Mammary epithelial cell (primary cell): ENCODE measurements at regions of chr22 and their contacts with region 1.

Region 1: GRCh38 chr22:26679003-26679629 is 21.7 kb downstream of the MIAT start:
- DNase-seq: peak; percentile 54
- H3K4me3 ChIP-seq: no peak overlapping the region
- H3K27ac ChIP-seq: no peak overlapping the region
- H3K4me1 ChIP-seq: peaks cover 6% of the 10 kb centered on the region
- H3K27me3 ChIP-seq: no peaks in the 10 kb centered on the region
- CTCF ChIP-seq: peak; percentile 92 to 94

Region 2: DNA sequence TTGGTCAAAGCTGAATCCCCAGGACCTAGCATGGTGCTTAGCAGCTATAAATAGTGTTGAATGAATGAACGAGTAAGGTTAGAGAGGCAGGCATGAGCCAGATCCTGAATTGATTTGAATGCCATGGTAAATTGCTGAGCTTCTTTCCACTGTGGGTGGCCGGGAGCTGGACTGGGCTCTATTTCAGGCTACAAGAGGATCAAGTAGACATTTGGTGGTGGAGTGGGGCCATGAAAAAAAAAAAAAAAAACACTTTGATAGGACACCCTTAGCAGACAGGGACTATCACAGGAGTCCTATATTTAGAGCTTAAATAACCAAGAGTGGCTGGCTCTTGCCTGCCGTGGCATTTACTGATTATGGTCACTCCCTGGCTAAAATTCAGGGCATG is 55.9 kb after region 1 on chr22:
- CTCF ChIA-PET with region 1: no interaction called
- dilution Hi-C with region 1: loop called (anchors 5 kb)
- in situ Hi-C with region 1: no loop called
- intact Hi-C with region 1: no loop called
- DNase-seq: no peak
- H3K4me3 ChIP-seq: no peak overlapping the region
- H3K27ac ChIP-seq: no peak overlapping the region
- H3K4me1 ChIP-seq: no peaks in the 10 kb centered on the region
- H3K27me3 ChIP-seq: no peaks in the 10 kb centered on the region
- CTCF ChIP-seq: no peak

Region 3: GRCh38 chr22:26756675-26757293 is 77.7 kb after region 1 on chr22:
- CTCF ChIA-PET with region 1: no interaction called
- dilution Hi-C with region 1: no loop called
- in situ Hi-C with region 1: no loop called
- intact Hi-C with region 1: loop called (anchors 2 kb)
- DNase-seq: peak; percentile 36
- H3K4me3 ChIP-seq: peak overlapping the region in 1 of 3 experiments; percentile 36
- H3K27ac ChIP-seq: no peak overlapping the region
- H3K4me1 ChIP-seq: peaks cover 3% of the 10 kb centered on the region
- H3K27me3 ChIP-seq: no peaks in the 10 kb centered on the region
- CTCF ChIP-seq: peak; percentile 48 to 72

Region 4: GRCh38 chr22:26785932-26786331 is 106.8 kb after region 1 on chr22:
- CTCF ChIA-PET with region 1: no interaction called
- dilution Hi-C with region 1: loop called (anchors 5 kb)
- in situ Hi-C with region 1: no loop called
- intact Hi-C with region 1: no loop called
- DNase-seq: no peak
- H3K4me3 ChIP-seq: no peak overlapping the region
- H3K27ac ChIP-seq: no peak overlapping the region
- H3K4me1 ChIP-seq: no peaks in the 10 kb centered on the region
- H3K27me3 ChIP-seq: no peaks in the 10 kb centered on the region
- CTCF ChIP-seq: no peak

Region 5: GRCh38 chr22:27134315-27134701 is 455.2 kb after region 1 on chr22:
- CTCF ChIA-PET with region 1: interaction called, 13 read pairs
- dilution Hi-C with region 1: no loop called
- in situ Hi-C with region 1: no loop called
- intact Hi-C with region 1: loop called (anchors 10 kb)
- DNase-seq: peak; percentile 89
- H3K4me3 ChIP-seq: no peak overlapping the region
- H3K27ac ChIP-seq: no peak overlapping the region
- H3K4me1 ChIP-seq: peaks cover 22% of the 10 kb centered on the region
- H3K27me3 ChIP-seq: no peaks in the 10 kb centered on the region
- CTCF ChIP-seq: no peak

Region 6: GRCh38 chr22:27267145-27267544 is 588.0 kb after region 1 on chr22:
- CTCF ChIA-PET with region 1: no interaction called
- dilution Hi-C with region 1: no loop called
- in situ Hi-C with region 1: loop called in 1 of 2 experiments (anchors 10 kb)
- intact Hi-C with region 1: no loop called
- DNase-seq: no peak
- H3K4me3 ChIP-seq: no peak overlapping the region
- H3K27ac ChIP-seq: no peak overlapping the region
- H3K4me1 ChIP-seq: no peaks in the 10 kb centered on the region
- H3K27me3 ChIP-seq: no peaks in the 10 kb centered on the region
- CTCF ChIP-seq: no peak

Region 7: GRCh38 chr22:28009272-28009827 is 1330.2 kb after region 1 on chr22:
- CTCF ChIA-PET with region 1: no interaction called
- dilution Hi-C with region 1: no loop called
- in situ Hi-C with region 1: no loop called
- intact Hi-C with region 1: loop called (anchors 5 kb)
- DNase-seq: peak; percentile 54
- H3K4me3 ChIP-seq: no peak overlapping the region
- H3K27ac ChIP-seq: no peak overlapping the region
- H3K4me1 ChIP-seq: peaks cover 3% of the 10 kb centered on the region
- H3K27me3 ChIP-seq: no peaks in the 10 kb centered on the region
- CTCF ChIP-seq: peak; percentile 93 to 98